Activated CD8-positive, alpha-beta memory T cell treated with anti-CD3 and anti-CD28 coated beads, Interleukin-2, amount 10 ng/mL, durations not matched to agents 7 days and 5 days (primary cell): ENCODE measurements at regions of chr20 and their contacts with region 1.

Region 1: GRCh38 chr20:57622579-57623377 is 2.6 kb upstream of the ZBP1 start:
- DNase-seq: peak; percentile 85
- ATAC-seq: no peak
- H3K4me3 Mint-ChIP-seq: no peak overlapping the region
- H3K27ac Mint-ChIP-seq: peak overlapping the region; percentile 60
- H3K4me1 Mint-ChIP-seq: peaks cover 66% of the 10 kb centered on the region
- H3K27me3 Mint-ChIP-seq: peaks cover 3% of the 10 kb centered on the region

Region 2: DNA sequence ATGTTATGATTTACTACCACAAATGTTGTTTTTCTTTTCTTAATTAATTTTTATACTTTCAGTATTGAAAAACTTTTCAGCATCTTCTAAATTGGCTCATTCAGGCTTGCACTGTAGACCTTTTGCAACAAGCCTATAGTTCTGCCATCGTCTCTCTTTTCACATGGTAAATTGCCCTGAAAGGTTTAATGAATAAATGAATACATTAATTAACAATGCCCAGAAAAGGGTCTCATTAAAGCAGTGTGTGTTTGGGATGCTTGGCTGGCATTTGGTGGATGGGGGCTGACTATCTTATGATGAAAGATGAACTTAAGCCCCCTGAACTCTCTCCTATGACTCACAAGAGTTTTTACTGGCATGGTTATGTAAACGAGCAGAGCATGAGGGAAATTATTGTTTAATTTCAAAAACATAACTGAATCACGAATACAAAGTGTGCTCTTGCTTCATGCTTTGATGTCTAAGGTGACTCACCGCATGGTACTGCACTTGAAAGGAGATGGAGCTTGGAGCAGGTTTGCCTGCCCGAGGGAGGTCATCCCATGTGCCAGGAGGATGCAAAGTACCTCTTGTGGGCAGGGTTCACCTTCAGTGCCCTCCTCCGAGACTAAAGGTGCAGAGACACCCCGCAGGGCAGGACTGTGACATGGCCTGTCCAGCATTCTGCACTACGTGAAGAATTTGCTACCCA is 75.7 kb before region 1 on chr20:
- CTCF ChIA-PET with region 1: no interaction called
- DNase-seq: no peak
- ATAC-seq: no peak
- H3K4me3 Mint-ChIP-seq: no peak overlapping the region
- H3K27ac Mint-ChIP-seq: no peak overlapping the region
- H3K4me1 Mint-ChIP-seq: no peaks in the 10 kb centered on the region
- H3K27me3 Mint-ChIP-seq: peaks cover 32% of the 10 kb centered on the region

Region 3: GRCh38 chr20:57560554-57561355 is 62.0 kb before region 1 on chr20 and contains the start of gene PCK1:
- CTCF ChIA-PET with region 1: no interaction called
- DNase-seq: no peak
- ATAC-seq: no peak
- H3K4me3 Mint-ChIP-seq: no peak within 1 kb of the TSS
- H3K27ac Mint-ChIP-seq: no peak within 1 kb of the TSS
- H3K4me1 Mint-ChIP-seq: no peaks in the 10 kb centered on the region
- H3K27me3 Mint-ChIP-seq: peaks cover 30% of the 10 kb centered on the region
- total RNA-seq, gene PCK1: not detected

Region 4: GRCh38 chr20:57596998-57597939 is 25.5 kb before region 1 on chr20:
- CTCF ChIA-PET with region 1: interaction called, 176 read pairs
- DNase-seq: peak; percentile 77
- ATAC-seq: peak; percentile 86
- H3K4me3 Mint-ChIP-seq: no peak overlapping the region
- H3K27ac Mint-ChIP-seq: no peak overlapping the region
- H3K4me1 Mint-ChIP-seq: peaks cover 26% of the 10 kb centered on the region
- H3K27me3 Mint-ChIP-seq: peaks cover 33% of the 10 kb centered on the region

Region 5: GRCh38 chr20:57633945-57634491 is 11.2 kb after region 1 on chr20:
- CTCF ChIA-PET with region 1: interaction called, 45 read pairs
- DNase-seq: peak; percentile 57
- ATAC-seq: peak; percentile 55
- H3K4me3 Mint-ChIP-seq: no peak overlapping the region
- H3K27ac Mint-ChIP-seq: peak overlapping the region; percentile 21
- H3K4me1 Mint-ChIP-seq: peaks cover 33% of the 10 kb centered on the region
- H3K27me3 Mint-ChIP-seq: peaks cover 76% of the 10 kb centered on the region

Region 6: DNA sequence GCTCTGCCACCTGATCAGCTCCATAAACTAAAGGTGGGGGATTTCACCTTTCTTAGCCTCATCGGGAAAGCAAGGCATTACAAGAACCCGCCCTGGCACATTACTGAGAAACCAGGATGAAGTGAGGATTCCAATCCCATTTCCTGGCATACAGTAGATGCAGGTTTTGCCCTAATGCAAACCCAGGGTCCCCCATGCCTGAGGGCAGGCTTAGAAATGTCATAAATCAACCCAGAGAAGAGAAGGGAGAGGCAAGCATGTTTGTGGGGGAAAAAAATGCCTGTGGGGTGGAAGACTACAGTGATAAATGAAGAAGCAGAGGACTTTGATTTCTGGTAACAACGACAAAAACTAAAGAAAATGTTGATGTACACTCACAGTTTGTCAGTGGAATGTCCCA is 105.1 kb after region 1 on chr20:
- CTCF ChIA-PET with region 1: no interaction called
- DNase-seq: no peak
- ATAC-seq: no peak
- H3K4me3 Mint-ChIP-seq: no peak overlapping the region
- H3K27ac Mint-ChIP-seq: no peak overlapping the region
- H3K4me1 Mint-ChIP-seq: no peaks in the 10 kb centered on the region
- H3K27me3 Mint-ChIP-seq: peaks cover 2% of the 10 kb centered on the region

Region 7: DNA sequence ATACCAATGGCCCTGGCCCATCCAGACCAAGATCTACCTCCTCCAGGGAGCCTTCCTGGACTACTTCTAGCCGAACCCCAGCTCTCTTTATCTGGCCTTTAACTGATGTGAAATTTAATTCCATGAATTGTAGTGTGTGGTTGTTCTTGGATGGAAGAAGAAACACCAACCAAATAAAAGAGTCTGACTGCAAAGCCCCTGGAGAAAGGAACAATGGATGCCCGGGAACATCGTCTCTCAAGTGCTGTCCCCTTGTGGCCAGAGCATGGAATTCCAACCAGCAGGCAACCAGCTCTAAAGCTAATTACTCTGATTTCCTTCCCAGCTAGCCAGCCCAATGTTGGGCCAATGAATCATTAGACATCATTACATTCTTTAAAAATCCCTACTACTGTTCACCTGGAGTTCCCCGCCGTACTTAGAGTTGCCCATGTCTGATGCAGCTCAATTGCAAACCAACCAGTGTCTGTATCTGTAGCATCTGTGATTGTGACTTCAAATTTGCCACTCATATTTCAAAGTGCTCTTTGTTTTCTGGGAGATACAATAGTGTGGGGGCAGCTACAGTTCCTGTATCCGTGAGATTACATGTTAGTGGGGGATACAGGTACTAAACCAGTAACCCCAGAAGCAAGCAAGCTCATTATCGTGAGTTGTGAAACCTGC is 464.5 kb after region 1 on chr20:
- CTCF ChIA-PET with region 1: interaction called, 21 read pairs
- DNase-seq: no peak
- ATAC-seq: no peak
- H3K4me3 Mint-ChIP-seq: no peak overlapping the region
- H3K27ac Mint-ChIP-seq: no peak overlapping the region
- H3K4me1 Mint-ChIP-seq: no peaks in the 10 kb centered on the region
- H3K27me3 Mint-ChIP-seq: no peaks in the 10 kb centered on the region